B cell (primary cell): ENCODE measurements at regions of chr2 and their contacts with region 1.

Region 1: DNA sequence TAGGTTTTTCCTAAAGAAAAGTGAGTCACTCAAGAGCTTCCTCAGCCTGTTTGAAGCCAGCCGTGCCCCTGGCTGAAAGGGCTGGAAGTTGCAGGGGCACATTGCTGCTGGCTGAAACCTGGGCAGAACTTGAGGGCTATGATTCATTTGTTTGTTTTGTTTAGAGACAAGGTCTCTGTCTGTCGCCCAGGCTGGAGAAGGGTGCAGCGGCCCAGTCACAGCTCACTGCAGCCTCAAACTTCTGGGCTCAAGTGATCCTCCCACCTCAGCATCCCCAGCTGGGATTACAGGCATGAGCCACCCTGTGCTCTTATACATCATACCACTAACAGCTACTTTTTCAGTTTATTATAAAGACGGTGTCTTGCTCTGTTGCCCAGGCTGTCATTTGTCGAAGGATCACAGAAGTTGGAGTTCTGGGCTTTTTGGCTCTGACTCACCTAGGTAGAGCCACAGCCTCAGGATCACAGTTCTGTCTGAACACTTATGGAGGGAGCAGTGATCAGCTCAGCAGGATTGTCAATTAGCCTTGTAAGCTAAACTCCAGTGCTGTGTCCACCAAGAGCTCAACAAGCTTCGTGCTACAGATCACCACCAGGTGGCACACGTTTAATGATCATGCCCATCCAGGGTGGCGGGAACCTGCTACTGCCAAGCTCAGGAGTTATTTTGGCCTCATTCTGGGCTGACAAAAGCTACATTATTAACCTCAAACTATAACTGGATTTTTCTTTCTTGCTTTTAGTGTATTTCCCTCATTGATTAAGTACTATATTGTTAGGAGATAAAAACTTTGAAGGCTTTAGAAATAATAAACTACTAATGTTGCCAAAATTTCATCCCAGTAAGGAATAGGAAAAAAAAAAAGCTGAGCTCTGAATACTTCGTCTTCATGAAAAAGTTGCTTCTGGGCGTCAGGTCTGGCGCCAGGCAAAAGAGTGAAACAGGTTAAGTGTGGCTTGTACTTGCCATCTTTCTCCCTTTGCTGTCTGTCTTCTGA is 57.9 kb downstream of the ARHGEF33 start:
- DNase-seq: peak; percentile 65
- ATAC-seq: peak; percentile 57
- H3K4me3 ChIP-seq: no peak overlapping the region
- H3K4me3 Mint-ChIP-seq: no peak overlapping the region
- H3K27ac ChIP-seq: no peak overlapping the region
- H3K27ac Mint-ChIP-seq: no peak overlapping the region
- H3K4me1 ChIP-seq: no peaks in the 10 kb centered on the region
- H3K4me1 Mint-ChIP-seq: no peaks in the 10 kb centered on the region
- H3K27me3 ChIP-seq: no peaks in the 10 kb centered on the region
- H3K27me3 Mint-ChIP-seq: no peaks in the 10 kb centered on the region
- CTCF ChIP-seq: peak; percentile 77

Region 2: DNA sequence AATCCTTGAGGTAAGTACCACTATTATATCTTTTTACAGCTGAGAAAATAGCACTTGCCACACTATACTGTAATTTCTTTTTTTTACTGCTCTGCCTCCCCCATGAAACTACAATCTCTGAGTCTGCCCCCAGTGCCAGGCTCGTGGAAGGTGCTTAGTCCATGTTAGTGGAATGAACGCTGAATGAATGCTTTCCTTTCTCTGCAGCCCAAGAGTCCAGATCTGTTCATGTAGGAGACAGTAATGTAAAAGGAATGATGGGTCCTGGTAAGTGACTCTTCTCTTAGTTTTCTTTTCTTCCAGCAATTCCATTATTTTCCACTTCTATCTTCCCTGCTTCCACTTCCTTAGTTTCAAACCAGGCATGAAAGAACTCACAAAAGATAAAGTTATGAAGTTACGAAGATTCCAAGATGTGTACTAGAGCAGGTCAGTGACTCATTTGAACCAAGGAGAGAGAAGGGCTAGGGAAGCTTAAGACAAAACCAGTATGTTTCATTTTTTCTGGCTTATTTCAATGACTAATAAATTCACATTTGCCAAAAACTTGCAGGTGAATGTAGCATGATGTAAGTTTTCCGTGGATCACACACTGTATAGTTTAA is 11.9 kb before region 1 on chr2:
- CTCF ChIA-PET with region 1: interaction called, 19 read pairs
- POLR2A ChIA-PET with region 1: no interaction called
- intact Hi-C with region 1: no loop called
- DNase-seq: no peak
- ATAC-seq: no peak
- H3K4me3 ChIP-seq: no peak overlapping the region
- H3K4me3 Mint-ChIP-seq: no peak overlapping the region
- H3K27ac ChIP-seq: no peak overlapping the region
- H3K27ac Mint-ChIP-seq: no peak overlapping the region
- H3K4me1 ChIP-seq: no peaks in the 10 kb centered on the region
- H3K4me1 Mint-ChIP-seq: peaks cover 2% of the 10 kb centered on the region
- H3K27me3 ChIP-seq: no peaks in the 10 kb centered on the region
- H3K27me3 Mint-ChIP-seq: peaks cover 13% of the 10 kb centered on the region
- CTCF ChIP-seq: no peak

Region 3: DNA sequence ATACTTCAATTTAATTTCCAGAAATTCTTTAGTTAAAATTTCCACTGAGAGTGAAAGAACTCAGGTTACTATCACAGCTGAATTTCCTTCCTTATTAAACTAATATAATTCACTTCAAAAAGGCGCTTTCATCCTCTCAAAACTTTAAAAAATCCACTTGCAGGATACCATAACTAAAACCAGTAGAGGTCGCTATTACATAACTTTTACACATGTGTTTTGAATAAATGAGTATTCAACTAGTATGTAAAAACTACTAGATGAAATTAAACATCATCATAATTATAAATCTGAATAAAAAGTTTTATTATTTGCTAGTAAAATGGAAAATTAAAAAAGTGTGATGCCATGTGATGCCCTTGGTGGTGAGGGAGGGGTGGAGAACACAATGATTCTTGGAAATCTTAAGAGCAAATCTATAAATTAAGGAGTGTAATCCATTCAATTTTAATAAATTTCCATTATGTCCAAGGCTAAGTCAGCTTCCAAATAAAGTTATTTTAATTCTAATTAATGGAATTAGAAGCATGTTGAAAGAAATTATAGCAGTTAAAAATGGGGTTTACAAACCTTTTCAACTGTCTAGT is 111.9 kb after region 1 on chr2:
- CTCF ChIA-PET with region 1: interaction called, 19 read pairs
- POLR2A ChIA-PET with region 1: no interaction called
- intact Hi-C with region 1: loop called (anchors 2 kb)
- DNase-seq: peak; percentile 65
- ATAC-seq: no peak
- H3K4me3 ChIP-seq: no peak overlapping the region
- H3K4me3 Mint-ChIP-seq: no peak overlapping the region
- H3K27ac ChIP-seq: no peak overlapping the region
- H3K27ac Mint-ChIP-seq: no peak overlapping the region
- H3K4me1 ChIP-seq: no peaks in the 10 kb centered on the region
- H3K4me1 Mint-ChIP-seq: no peaks in the 10 kb centered on the region
- H3K27me3 ChIP-seq: no peaks in the 10 kb centered on the region
- H3K27me3 Mint-ChIP-seq: no peaks in the 10 kb centered on the region
- CTCF ChIP-seq: peak; percentile 91